ENCODE measurements at regions of chr3 and their contacts with region 1.

Region 1: GRCh38 chr3:12891985-12892839 is 50.8 kb upstream of the RPL32 start:
- DNase-seq: peak; percentile 66
- ATAC-seq: peak; percentile 79
- H3K4me3 ChIP-seq: no peak overlapping the region
- H3K27ac ChIP-seq: no peak overlapping the region
- H3K4me1 ChIP-seq: no peaks in the 10 kb centered on the region
- H3K27me3 ChIP-seq: peaks cover 11% of the 10 kb centered on the region
- CTCF ChIP-seq: peak; percentile 96
- POLR2A ChIP-seq: no peak
- RAD21 ChIP-seq: peak; percentile 97

Region 2: GRCh38 chr3:12175844-12176453 is 716.3 kb before region 1 on chr3:
- CTCF ChIA-PET with region 1: no interaction called
- POLR2A ChIA-PET with region 1: no interaction called
- dilution Hi-C with region 1: no loop called
- in situ Hi-C with region 1: no loop called
- intact Hi-C with region 1: loop called (anchors 2 kb)
- DNase-seq: peak; percentile 50
- ATAC-seq: peak; percentile 92
- H3K4me3 ChIP-seq: no peak overlapping the region
- H3K27ac ChIP-seq: no peak overlapping the region
- H3K4me1 ChIP-seq: peaks cover 12% of the 10 kb centered on the region
- H3K27me3 ChIP-seq: no peaks in the 10 kb centered on the region
- CTCF ChIP-seq: peak; percentile 77
- POLR2A ChIP-seq: no peak
- RAD21 ChIP-seq: peak; percentile 88

Region 3: GRCh38 chr3:12706504-12707253 is 185.5 kb before region 1 on chr3:
- CTCF ChIA-PET with region 1: no interaction called
- POLR2A ChIA-PET with region 1: no interaction called
- dilution Hi-C with region 1: no loop called
- in situ Hi-C with region 1: no loop called
- intact Hi-C with region 1: loop called (anchors 5 kb)
- DNase-seq: peak; percentile 74
- ATAC-seq: peak; percentile 95
- H3K4me3 ChIP-seq: no peak overlapping the region
- H3K27ac ChIP-seq: no peak overlapping the region
- H3K4me1 ChIP-seq: peaks cover 3% of the 10 kb centered on the region; the same call in 1 of the 2 replicates
- H3K27me3 ChIP-seq: peaks cover 8% of the 10 kb centered on the region; the same call in 1 of the 2 replicates
- CTCF ChIP-seq: peak; percentile 93
- POLR2A ChIP-seq: no peak
- RAD21 ChIP-seq: peak; percentile 80

Region 4: DNA sequence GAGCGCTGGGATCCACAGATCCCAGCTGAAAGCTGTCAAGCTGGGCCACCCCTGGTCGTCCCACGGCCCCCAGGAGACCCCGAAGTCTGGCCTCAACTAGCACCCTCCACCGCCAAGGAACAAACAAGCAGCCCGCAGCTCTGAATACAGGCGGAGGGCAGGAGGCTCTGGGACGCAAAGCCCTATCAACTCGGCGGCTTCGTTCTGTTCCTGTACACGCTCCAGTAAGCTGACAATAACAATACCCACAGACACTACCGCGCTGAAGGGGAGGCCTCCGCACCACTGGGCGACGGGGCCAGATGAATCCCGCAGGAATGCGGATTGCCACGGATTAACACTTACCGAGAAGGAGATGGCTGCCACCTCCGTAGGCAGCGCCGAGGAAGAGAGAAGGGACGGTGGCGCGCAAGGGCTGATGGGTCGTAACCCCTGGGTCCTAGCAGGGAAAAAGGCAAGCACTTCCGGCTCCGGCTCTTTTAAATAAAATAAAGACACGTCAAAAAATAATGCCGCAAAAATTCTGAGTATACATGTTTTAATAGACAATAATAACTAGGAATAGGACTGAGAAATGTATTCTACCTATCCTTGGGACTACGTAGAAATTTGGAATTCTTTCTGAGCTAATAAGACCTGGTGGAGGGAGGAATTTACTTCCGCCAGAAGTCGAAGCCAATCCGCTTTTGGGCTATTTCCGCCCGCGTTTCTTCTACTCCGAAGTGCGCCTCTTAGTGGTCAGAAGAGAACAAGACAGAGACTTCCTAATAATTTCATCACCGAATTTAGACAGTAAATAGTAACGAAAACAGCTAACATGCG is 50.9 kb before region 1 on chr3 and contains the start of gene RPL32:
- CTCF ChIA-PET with region 1: no interaction called
- POLR2A ChIA-PET with region 1: no interaction called
- dilution Hi-C with region 1: no loop called
- in situ Hi-C with region 1: no loop called
- intact Hi-C with region 1: loop called (anchors 2 kb)
- DNase-seq: peak; percentile 96
- ATAC-seq: peak; percentile 93
- H3K4me3 ChIP-seq: peak within 1 kb of the TSS; percentile 83
- H3K27ac ChIP-seq: peak within 1 kb of the TSS; percentile 85
- H3K4me1 ChIP-seq: peaks cover 15% of the 10 kb centered on the region
- H3K27me3 ChIP-seq: no peaks in the 10 kb centered on the region
- CTCF ChIP-seq: peak; percentile 89
- POLR2A ChIP-seq: peak; percentile 98
- RAD21 ChIP-seq: peak; percentile 29; the same call in 1 of the 2 replicates
- total RNA-seq, gene RPL32: 566 and 644 TPM in 2 replicates

Region 5: DNA sequence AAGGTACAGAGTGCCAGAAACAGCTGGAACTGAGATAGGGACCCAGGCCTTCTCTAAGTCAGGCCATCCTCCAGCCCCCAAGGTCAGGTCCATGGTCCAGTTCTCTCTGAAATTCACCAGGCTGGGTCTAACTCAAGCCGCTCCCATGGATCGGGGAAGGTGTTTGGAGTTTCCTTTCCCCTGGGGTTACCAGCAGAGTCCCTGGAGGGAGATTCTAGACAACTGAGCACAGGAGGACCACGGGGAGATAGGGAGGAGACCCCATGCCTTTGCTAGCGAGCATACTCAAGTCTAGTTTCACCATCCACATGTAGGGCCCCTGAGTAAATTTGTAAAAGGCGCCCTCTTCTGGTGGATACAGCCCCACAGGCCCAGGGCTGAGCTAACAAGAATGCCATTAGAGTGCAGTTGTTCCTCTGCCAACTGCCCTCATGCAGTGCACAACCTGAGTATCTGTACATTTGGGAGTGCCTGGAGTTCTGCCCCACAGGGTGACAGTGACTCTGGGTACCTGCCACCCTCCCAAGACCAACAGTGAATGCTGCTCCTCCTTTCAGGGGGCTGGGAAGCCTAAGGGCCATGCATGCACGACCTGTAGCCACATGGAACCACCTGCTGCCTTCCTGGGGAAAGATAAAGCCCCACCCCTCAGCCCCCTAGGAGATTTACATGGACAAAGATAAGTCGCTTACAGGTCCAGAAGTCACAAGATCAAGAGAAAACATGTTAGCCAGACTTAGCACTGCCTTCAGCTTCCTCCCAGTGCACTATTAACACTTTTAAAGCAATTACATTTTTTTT is 92.0 kb after region 1 on chr3:
- CTCF ChIA-PET with region 1: no interaction called
- POLR2A ChIA-PET with region 1: no interaction called
- dilution Hi-C with region 1: no loop called
- in situ Hi-C with region 1: no loop called
- intact Hi-C with region 1: loop called (anchors 10 kb)
- DNase-seq: peak; percentile 66
- ATAC-seq: peak; percentile 95
- H3K4me3 ChIP-seq: no peak overlapping the region
- H3K27ac ChIP-seq: no peak overlapping the region
- H3K4me1 ChIP-seq: no peaks in the 10 kb centered on the region
- H3K27me3 ChIP-seq: no peaks in the 10 kb centered on the region
- CTCF ChIP-seq: peak; percentile 81
- POLR2A ChIP-seq: no peak
- RAD21 ChIP-seq: peak; percentile 74

Measured in IMR-90 (cell line).